ENCODE measurements at regions of chr16 and their contacts with region 1.

Region 1: GRCh38 chr16:28924732-28925385 is at the start of gene RABEP2:
- DNase-seq: peak; percentile 86
- ATAC-seq: peak; percentile 85
- H3K4me3 ChIP-seq: peak within 1 kb of the TSS; percentile 84 to 99 (median 87)
- H3K27ac ChIP-seq: peak within 1 kb of the TSS; percentile 89
- H3K4me1 ChIP-seq: peaks cover 71% of the 10 kb centered on the region
- H3K27me3 ChIP-seq: no peaks in the 10 kb centered on the region
- CTCF ChIP-seq: no peak
- EP300 ChIP-seq: no peak
- POLR2A ChIP-seq: no peak; a peak in 1 of 4 replicates
- RAD21 ChIP-seq: no peak
- total RNA-seq, gene RABEP2: 16.1 and 18.4 TPM in 2 replicates

Region 2: DNA sequence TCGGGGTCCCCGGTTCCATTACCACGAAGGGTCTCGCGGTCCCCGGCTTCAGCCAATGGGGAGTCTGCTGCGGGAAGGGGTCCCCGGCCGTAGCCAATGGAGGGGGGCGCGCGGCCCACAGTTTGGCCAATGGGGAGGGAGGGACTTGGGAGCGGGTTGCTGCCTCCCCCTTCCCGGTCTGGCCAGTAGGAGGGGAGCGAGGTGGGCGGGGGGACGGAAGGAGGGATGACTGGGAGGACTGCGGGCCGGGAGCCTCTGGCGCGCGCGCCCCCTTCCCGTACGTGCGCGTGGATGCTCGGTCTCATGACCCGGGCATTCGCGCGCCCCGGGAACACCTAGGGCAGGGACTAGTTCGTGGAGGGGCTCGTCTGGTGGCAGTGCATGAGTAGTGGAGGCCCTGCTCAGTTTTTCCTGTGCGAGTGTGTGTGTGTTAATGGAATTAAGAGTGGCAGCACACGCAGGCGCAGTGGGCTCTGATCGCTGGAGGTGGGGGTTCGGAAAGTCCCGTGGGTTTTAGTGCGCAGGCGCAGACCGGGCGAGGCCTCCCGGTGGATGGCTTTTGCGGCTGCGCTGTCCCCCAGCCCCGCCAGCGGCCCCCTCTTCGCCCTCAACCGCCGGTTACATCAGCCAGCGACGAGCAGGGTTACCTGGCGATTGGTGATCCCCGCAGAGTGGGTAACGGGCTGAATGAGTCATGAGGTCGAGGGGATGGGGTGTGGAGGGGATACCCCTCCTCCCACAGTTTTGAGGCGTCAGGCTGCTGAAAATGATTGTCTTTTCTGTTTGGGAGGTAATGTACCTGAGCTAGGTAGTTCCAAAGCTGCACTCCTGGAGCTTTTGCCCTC is 100.8 kb before region 1 on chr16:
- CTCF ChIA-PET with region 1: no interaction called
- POLR2A ChIA-PET with region 1: interaction called, 32 read pairs
- in situ Hi-C with region 1: no loop called
- intact Hi-C with region 1: no loop called
- DNase-seq: peak; percentile 97
- ATAC-seq: peak; percentile 91
- H3K4me3 ChIP-seq: peak overlapping the region; percentile 77 to 99 (median 89)
- H3K27ac ChIP-seq: peak overlapping the region; percentile 97
- H3K4me1 ChIP-seq: peaks cover 52% of the 10 kb centered on the region
- H3K27me3 ChIP-seq: no peaks in the 10 kb centered on the region; a peak in 1 of 5 replicates
- CTCF ChIP-seq: peak; percentile 57
- EP300 ChIP-seq: peak in 1 of 2 experiments; percentile 6; a peak in 1 of 4 replicates
- POLR2A ChIP-seq: peak; percentile 71 to 76
- RAD21 ChIP-seq: no peak

Region 3: DNA sequence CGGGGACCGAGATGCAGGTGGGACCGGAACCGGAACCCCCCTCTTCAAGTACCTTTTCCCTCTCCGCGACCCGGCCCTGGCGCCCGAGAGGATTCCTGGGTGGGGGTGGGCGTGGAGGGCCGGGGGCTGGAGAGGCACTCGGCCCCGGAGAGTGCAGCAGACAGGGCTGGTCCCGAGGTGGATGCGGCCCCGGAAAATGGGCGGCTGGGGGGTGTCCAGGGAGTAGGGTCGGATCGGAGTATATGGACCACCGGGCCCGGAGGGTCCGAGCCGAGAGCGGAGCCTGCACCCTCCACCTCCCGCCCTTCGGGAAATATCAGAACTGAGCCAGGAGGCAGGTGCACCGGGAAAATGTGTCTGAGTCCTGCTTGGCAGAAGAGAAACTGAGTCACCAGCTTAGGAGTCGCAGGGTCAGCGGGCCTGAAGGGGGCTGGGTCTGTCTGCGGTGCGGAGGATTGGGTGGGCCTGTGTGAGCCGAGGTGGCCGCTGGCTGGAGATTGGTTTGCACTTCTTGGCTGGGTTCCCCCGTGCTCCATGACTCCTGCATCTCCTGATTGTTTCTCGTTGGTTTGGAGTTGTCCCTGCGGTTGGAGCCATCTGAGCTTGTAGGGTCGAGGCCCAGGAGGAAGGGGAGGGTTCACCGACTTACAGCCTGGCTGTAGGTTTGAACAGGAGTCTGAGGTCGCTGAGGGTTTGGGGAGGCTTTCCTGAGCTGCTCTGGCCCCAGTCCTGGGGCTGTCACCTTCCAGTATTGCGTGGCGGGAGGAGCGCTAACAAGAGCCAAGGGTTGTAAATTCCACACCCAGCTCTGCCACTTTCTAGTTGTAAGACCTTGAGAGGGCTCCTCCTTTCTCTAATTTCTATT is 60.7 kb before region 1 on chr16:
- CTCF ChIA-PET with region 1: no interaction called
- POLR2A ChIA-PET with region 1: interaction called, 77 read pairs
- in situ Hi-C with region 1: no loop called
- intact Hi-C with region 1: no loop called
- DNase-seq: no peak
- ATAC-seq: peak; percentile 36
- H3K4me3 ChIP-seq: peak overlapping the region; percentile 85 to 98 (median 95)
- H3K27ac ChIP-seq: peak overlapping the region; percentile 99
- H3K4me1 ChIP-seq: peaks cover 36% of the 10 kb centered on the region
- H3K27me3 ChIP-seq: no peaks in the 10 kb centered on the region; a peak in 1 of 5 replicates
- CTCF ChIP-seq: no peak
- EP300 ChIP-seq: no peak; a peak in 1 of 4 replicates
- POLR2A ChIP-seq: no peak
- RAD21 ChIP-seq: no peak

Region 4: DNA sequence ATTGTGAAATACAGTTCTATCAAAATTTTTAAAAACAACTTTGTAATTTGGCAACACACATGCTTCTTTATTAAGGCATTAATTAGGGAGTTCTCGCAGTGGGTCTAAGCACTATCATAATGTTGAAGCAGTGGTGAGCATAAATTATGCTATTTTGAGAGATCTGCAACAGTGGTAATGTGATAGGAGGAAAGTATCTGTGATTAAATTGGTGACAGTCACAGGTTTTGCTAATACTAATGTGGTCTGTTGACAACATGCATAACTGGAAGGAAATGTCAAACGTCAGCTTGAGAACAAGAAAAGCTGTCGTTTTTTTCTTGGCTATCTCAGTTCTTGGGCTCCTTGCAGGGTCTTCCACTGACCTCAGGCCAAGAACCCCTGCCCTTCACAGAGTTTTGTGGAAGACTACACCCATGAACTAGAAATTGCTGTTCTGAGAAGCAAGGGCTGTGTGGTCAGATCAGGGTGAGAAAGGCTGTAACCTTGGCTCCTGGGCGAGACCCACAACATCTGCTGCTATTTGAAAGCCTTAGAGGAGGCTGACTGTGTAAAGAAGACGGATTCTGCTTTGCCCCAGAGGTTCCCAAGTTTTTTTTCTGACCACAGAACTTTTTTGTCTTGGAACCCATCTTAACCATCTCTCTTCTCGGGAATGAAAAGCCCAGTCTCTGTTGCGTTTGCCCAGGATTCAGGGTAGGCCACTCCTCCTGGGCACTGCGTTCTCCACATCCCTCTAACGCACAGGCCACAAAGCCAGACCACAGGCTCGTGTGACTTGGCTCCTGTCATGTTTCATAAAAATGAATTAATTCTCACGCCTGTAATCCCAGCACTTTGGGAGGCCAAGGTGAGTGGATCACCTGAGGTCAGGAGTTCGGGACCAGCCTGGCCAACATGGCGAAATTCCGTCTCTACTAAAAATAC is 32.6 kb before region 1 on chr16:
- CTCF ChIA-PET with region 1: no interaction called
- POLR2A ChIA-PET with region 1: interaction called, 11 read pairs
- in situ Hi-C with region 1: no loop called
- intact Hi-C with region 1: loop called (anchors 5 kb)
- DNase-seq: no peak
- ATAC-seq: no peak
- H3K4me3 ChIP-seq: no peak overlapping the region
- H3K27ac ChIP-seq: no peak overlapping the region
- H3K4me1 ChIP-seq: peaks cover 26% of the 10 kb centered on the region
- H3K27me3 ChIP-seq: no peaks in the 10 kb centered on the region
- CTCF ChIP-seq: no peak
- EP300 ChIP-seq: no peak
- POLR2A ChIP-seq: no peak
- RAD21 ChIP-seq: no peak

Region 5: GRCh38 chr16:28943281-28943680 is 18.4 kb after region 1 on chr16:
- CTCF ChIA-PET with region 1: interaction called, 8 read pairs
- POLR2A ChIA-PET with region 1: interaction called, 60 read pairs
- in situ Hi-C with region 1: no loop called
- intact Hi-C with region 1: loop called (anchors 1 kb)
- DNase-seq: no peak
- ATAC-seq: no peak
- H3K4me3 ChIP-seq: no peak overlapping the region
- H3K27ac ChIP-seq: no peak overlapping the region
- H3K4me1 ChIP-seq: peaks cover 28% of the 10 kb centered on the region
- H3K27me3 ChIP-seq: no peaks in the 10 kb centered on the region
- CTCF ChIP-seq: no peak
- EP300 ChIP-seq: no peak
- POLR2A ChIP-seq: no peak
- RAD21 ChIP-seq: no peak

Region 6: DNA sequence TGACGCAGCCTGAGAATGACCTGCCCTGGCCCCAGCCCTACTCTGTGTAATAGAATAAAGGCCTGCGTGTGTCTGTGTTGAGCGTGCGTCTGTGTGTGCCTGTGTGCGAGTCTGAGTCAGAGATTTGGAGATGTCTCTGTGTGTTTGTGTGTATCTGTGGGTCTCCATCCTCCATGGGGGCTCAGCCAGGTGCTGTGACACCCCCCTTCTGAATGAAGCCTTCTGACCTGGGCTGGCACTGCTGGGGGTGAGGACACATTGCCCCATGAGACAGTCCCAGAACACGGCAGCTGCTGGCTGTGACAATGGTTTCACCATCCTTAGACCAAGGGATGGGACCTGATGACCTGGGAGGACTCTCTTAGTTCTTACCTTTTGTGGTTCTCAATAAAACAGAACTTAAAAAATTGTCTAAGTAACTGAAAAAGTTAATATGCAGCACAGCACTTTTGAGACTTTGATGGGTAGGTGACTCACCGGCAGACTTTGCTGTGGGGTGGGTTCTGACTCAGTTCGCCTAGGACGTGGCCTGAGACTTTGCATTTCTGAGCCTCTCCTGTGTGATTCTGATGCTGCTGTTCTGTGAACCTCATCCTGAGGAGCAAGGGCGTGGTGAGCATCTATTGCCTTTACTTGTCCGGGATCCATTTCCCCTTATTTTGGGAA is 65.6 kb after region 1 on chr16:
- CTCF ChIA-PET with region 1: no interaction called
- POLR2A ChIA-PET with region 1: no interaction called
- in situ Hi-C with region 1: no loop called
- intact Hi-C with region 1: no loop called
- DNase-seq: no peak
- ATAC-seq: no peak
- H3K4me3 ChIP-seq: no peak overlapping the region
- H3K27ac ChIP-seq: no peak overlapping the region
- H3K4me1 ChIP-seq: peaks cover 8% of the 10 kb centered on the region
- H3K27me3 ChIP-seq: no peaks in the 10 kb centered on the region
- CTCF ChIP-seq: no peak
- EP300 ChIP-seq: no peak
- POLR2A ChIP-seq: no peak
- RAD21 ChIP-seq: no peak

Region 7: DNA sequence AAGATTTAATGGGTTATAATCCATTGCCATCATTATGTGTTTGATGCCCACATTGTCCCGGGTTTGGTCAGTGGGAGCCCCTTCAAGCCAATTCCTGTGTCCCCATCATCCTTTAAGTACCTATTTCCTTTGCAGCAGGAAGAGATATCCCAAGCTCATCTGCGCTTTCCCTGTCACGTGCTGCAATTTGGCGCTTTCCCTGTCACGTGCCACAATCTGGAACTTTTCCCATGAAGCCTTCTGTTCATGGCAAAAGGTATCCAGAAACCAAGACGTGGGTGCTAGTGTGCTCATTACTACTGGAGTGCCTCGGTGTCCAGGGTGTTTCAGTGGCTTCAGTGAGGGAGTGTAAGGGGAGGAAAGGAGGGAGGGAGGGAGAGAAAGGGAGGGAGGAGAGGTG is 313.1 kb after region 1 on chr16:
- CTCF ChIA-PET with region 1: no interaction called
- POLR2A ChIA-PET with region 1: no interaction called
- in situ Hi-C with region 1: no loop called
- intact Hi-C with region 1: no loop called
- DNase-seq: no peak
- ATAC-seq: no peak
- H3K4me3 ChIP-seq: no peak overlapping the region
- H3K27ac ChIP-seq: no peak overlapping the region
- H3K4me1 ChIP-seq: peaks cover 13% of the 10 kb centered on the region
- H3K27me3 ChIP-seq: peaks cover 1 to 14% of the 10 kb centered on the region in 2 experiments; a peak in 3 of 5 replicates
- CTCF ChIP-seq: no peak
- EP300 ChIP-seq: no peak
- POLR2A ChIP-seq: no peak
- RAD21 ChIP-seq: no peak